Naive thymus-derived CD4-positive, alpha-beta T cell (primary cell): ENCODE measurements at regions of chr19 and their contacts with region 1.

Region 1: GRCh38 chr19:21396893-21397572 is at the start of gene ZNF493:
- DNase-seq: peak; percentile 76 to 95 (median 91)
- ATAC-seq: peak; percentile 100
- H3K4me3 ChIP-seq: peak within 1 kb of the TSS; percentile 80
- H3K4me3 Mint-ChIP-seq: peak within 1 kb of the TSS; percentile 90 to 99 (median 97)
- H3K27ac ChIP-seq: peak within 1 kb of the TSS; percentile 77
- H3K27ac Mint-ChIP-seq: peak within 1 kb of the TSS; percentile 68 to 97 (median 92)
- H3K4me1 ChIP-seq: peaks cover 6 to 11% of the 10 kb centered on the region in 2 donors
- H3K4me1 Mint-ChIP-seq: peaks cover 19 to 48% (median 32%) of the 10 kb centered on the region in 7 donors
- H3K27me3 ChIP-seq: no peaks in the 10 kb centered on the region
- H3K27me3 Mint-ChIP-seq: peaks cover 0 to 4% (median 0%) of the 10 kb centered on the region in 5 donors
- total RNA-seq, gene ZNF493: 19.7 to 78.3 (median 34.6) TPM

Region 2: GRCh38 chr19:20051841-20052768 is 1344.9 kb before region 1 on chr19:
- CTCF ChIA-PET with region 1: no interaction called
- POLR2A ChIA-PET with region 1: no interaction called
- intact Hi-C with region 1: loop called in 1 of 2 experiments (anchors 2 kb)
- DNase-seq: peak; percentile 17 to 50 (median 44)
- ATAC-seq: peak; percentile 93
- H3K4me3 ChIP-seq: peak overlapping the region; percentile 98
- H3K4me3 Mint-ChIP-seq: peak overlapping the region; percentile 95 to 100 (median 98)
- H3K27ac ChIP-seq: peak overlapping the region; percentile 77
- H3K27ac Mint-ChIP-seq: peak overlapping the region; percentile 83 to 97 (median 94)
- H3K4me1 ChIP-seq: peaks cover 8% of the 10 kb centered on the region in 2 donors
- H3K4me1 Mint-ChIP-seq: peaks cover 0 to 17% (median 8%) of the 10 kb centered on the region in 7 donors
- H3K27me3 ChIP-seq: no peaks in the 10 kb centered on the region
- H3K27me3 Mint-ChIP-seq: peaks cover 0 to 4% (median 0%) of the 10 kb centered on the region in 5 donors

Region 3: GRCh38 chr19:21082011-21082975 is 314.7 kb before region 1 on chr19 and contains the start of gene ZNF714:
- CTCF ChIA-PET with region 1: no interaction called
- POLR2A ChIA-PET with region 1: no interaction called
- intact Hi-C with region 1: loop called in 1 of 2 experiments (anchors 5 kb)
- DNase-seq: peak; percentile 55 to 90 (median 80)
- ATAC-seq: peak; percentile 100
- H3K4me3 ChIP-seq: peak within 1 kb of the TSS; percentile 92
- H3K4me3 Mint-ChIP-seq: peak within 1 kb of the TSS; percentile 91 to 100 (median 99)
- H3K27ac ChIP-seq: peak within 1 kb of the TSS; percentile 74
- H3K27ac Mint-ChIP-seq: peak within 1 kb of the TSS; percentile 85 to 99 (median 95)
- H3K4me1 ChIP-seq: no peaks in the 10 kb centered on the region
- H3K4me1 Mint-ChIP-seq: peaks cover 3 to 24% (median 18%) of the 10 kb centered on the region in 7 donors
- H3K27me3 ChIP-seq: no peaks in the 10 kb centered on the region
- H3K27me3 Mint-ChIP-seq: no peaks in the 10 kb centered on the region
- total RNA-seq, gene ZNF714: 7.4 to 22.3 (median 13.3) TPM

Region 4: DNA sequence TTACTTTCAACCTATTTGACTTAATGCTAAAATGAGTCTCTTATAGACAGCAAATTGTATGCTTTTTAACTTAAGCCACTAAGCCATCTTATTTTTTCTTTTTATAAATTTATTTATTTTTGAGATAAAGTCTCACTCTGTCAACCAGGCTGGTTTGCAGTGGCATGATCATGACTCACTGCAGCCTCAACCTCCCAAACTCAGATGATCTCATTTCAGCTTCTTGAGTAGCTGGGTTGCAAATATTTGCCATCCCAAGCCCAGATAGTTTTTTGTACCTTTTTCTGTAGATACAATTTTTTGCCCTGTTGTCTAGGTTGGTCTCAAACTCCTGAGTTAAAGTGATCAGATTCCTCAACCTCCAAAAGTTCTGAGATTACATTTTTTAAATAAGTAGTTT is 287.9 kb before region 1 on chr19:
- CTCF ChIA-PET with region 1: no interaction called
- POLR2A ChIA-PET with region 1: no interaction called
- intact Hi-C with region 1: no loop called
- DNase-seq: no peak
- ATAC-seq: no peak
- H3K4me3 ChIP-seq: no peak overlapping the region
- H3K4me3 Mint-ChIP-seq: no peak overlapping the region
- H3K27ac ChIP-seq: no peak overlapping the region
- H3K27ac Mint-ChIP-seq: no peak overlapping the region
- H3K4me1 ChIP-seq: no peaks in the 10 kb centered on the region
- H3K4me1 Mint-ChIP-seq: no peaks in the 10 kb centered on the region
- H3K27me3 ChIP-seq: no peaks in the 10 kb centered on the region
- H3K27me3 Mint-ChIP-seq: no peaks in the 10 kb centered on the region

Region 5: DNA sequence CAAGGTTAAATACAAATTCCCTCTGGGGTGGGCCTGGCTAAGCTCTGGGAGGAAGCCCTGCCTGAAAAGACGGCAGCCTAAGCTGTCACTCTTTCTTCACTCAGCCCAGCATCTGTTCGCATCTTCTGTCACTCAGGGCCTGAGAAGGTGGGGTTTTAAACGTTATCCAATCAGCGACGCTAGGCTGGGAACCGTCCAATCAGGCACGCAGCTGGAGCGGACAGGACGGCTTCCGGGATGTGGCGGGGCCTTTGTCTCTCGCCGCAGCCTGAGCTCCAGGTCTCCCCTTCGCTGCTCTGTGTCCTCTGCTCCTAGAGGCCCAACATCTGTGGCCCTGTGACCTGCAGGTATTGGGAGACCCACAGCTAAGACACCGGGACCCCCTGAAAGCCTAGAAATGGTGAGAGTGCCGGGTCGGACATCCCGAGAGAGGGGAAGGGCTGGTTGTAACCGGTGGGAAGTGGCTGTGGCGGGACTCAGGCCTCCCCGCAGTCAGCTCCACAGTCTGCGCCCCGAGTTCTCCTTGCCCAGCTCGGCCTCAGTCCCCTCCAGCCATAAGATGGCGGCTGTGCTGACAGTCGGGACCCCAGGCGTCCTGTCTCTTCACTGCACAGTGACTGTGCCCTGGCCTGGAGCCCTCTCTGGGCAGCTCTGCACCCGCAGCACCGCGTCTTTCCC is 255.1 kb before region 1 on chr19 and contains the start of gene ZNF431:
- CTCF ChIA-PET with region 1: no interaction called
- POLR2A ChIA-PET with region 1: interaction called, 3 read pairs
- intact Hi-C with region 1: loop called (anchors 1 to 5 kb)
- DNase-seq: peak; percentile 63 to 95 (median 91)
- ATAC-seq: peak; percentile 100
- H3K4me3 ChIP-seq: peak within 1 kb of the TSS; percentile 94
- H3K4me3 Mint-ChIP-seq: peak within 1 kb of the TSS; percentile 95 to 98 (median 97)
- H3K27ac ChIP-seq: peak within 1 kb of the TSS; percentile 91
- H3K27ac Mint-ChIP-seq: peak within 1 kb of the TSS; percentile 93 to 99 (median 96)
- H3K4me1 ChIP-seq: peaks cover 3 to 6% of the 10 kb centered on the region in 2 donors
- H3K4me1 Mint-ChIP-seq: peaks cover 20 to 69% (median 54%) of the 10 kb centered on the region in 7 donors
- H3K27me3 ChIP-seq: no peaks in the 10 kb centered on the region
- H3K27me3 Mint-ChIP-seq: no peaks in the 10 kb centered on the region
- total RNA-seq, gene ZNF431: 19.1 to 36.8 (median 25.4) TPM

Region 6: DNA sequence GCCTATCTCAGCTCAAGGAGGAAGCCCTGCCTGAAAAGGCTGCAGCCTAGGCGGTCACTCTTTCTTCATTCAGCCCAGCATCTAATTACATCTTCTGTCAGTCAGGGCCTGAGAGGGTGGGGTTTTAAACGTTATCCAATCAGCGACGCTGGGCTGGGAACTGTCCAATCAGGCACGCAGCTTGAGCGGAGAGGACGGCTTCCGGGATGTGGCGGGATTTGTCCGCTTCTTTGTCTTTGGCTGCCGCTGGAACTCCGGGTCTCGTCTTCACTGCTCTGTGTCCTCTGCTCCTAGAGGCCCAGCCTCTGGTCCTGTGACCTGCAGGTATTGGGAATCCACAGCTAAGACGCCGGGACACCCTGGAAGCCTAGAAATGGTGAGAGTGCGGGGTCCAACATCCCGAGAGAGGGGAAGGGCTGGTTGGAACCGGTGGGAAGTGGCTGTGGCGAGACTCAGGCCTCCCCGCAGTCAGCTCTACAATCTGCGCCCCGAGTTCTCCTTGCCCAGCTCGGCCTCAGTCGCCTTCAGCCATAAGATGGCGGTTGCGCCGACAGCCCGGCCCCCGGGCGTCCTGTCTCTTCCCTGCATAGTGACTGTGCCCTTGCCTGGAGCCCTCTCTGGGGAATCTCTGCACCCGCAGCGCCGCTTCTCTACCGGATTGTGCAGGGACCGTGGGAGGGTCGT is 38.1 kb before region 1 on chr19 and contains the start of gene ZNF738:
- CTCF ChIA-PET with region 1: no interaction called
- POLR2A ChIA-PET with region 1: interaction called, 6 read pairs
- intact Hi-C with region 1: loop called (anchors 1 kb)
- DNase-seq: peak; percentile 59 to 87 (median 76)
- ATAC-seq: peak; percentile 98
- H3K4me3 ChIP-seq: peak within 1 kb of the TSS; percentile 98
- H3K4me3 Mint-ChIP-seq: peak within 1 kb of the TSS; percentile 93 to 99 (median 98)
- H3K27ac ChIP-seq: peak within 1 kb of the TSS; percentile 77
- H3K27ac Mint-ChIP-seq: peak within 1 kb of the TSS; percentile 85 to 98 (median 91)
- H3K4me1 ChIP-seq: peaks cover 0 to 6% of the 10 kb centered on the region in 2 donors
- H3K4me1 Mint-ChIP-seq: peaks cover 6 to 17% (median 14%) of the 10 kb centered on the region in 7 donors
- H3K27me3 ChIP-seq: no peaks in the 10 kb centered on the region
- H3K27me3 Mint-ChIP-seq: no peaks in the 10 kb centered on the region
- total RNA-seq, gene ZNF738: 6.4 to 11.4 (median 9.8) TPM

Region 7: DNA sequence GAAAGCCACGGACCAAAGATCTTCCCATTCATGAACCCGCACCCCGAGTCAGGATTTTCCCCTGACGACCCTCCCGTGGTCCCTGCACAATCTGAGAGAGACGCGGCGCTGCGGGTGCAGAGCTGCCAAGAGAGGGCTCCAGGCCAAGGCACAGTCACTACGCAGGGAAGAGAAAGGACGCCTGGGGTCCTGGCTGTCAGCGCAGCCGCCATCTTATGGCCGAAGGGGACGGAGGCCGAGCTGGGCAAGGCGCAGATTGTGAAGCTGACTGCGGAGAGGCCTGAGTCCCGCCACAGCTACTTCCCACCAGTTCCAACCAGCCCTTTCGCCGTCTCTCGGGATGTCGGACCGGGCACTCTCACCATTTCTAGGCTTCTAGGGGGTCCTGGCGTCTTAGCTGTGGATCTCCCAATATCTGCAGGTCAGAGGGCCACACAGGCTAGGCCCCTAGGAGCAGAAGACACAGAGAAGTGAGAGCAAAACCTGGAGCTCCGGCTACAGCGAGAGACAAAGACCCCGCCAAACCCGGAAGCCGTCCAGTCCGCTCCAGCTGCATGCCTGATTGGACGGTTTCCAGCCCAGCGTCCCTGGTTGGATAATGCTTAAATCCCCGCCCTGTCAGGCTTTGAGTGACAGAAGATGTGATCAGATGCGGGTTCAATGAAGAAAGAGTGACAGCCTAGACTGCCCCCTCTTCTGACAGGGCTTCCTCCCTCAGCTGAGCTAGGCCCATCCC is 370.2 kb after region 1 on chr19 and contains the start of gene ZNF100:
- CTCF ChIA-PET with region 1: no interaction called
- POLR2A ChIA-PET with region 1: no interaction called
- intact Hi-C with region 1: loop called in 1 of 2 experiments (anchors 2 kb)
- DNase-seq: peak; percentile 64 to 88 (median 80)
- ATAC-seq: peak; percentile 98
- H3K4me3 ChIP-seq: peak within 1 kb of the TSS; percentile 97
- H3K4me3 Mint-ChIP-seq: peak within 1 kb of the TSS; percentile 92 to 98 (median 97)
- H3K27ac ChIP-seq: peak within 1 kb of the TSS; percentile 81
- H3K27ac Mint-ChIP-seq: peak within 1 kb of the TSS; percentile 89 to 98 (median 92)
- H3K4me1 ChIP-seq: no peaks in the 10 kb centered on the region
- H3K4me1 Mint-ChIP-seq: peaks cover 7 to 43% (median 27%) of the 10 kb centered on the region in 7 donors
- H3K27me3 ChIP-seq: no peaks in the 10 kb centered on the region
- H3K27me3 Mint-ChIP-seq: no peaks in the 10 kb centered on the region
- total RNA-seq, gene ZNF100: 9.5 to 22.5 (median 18.4) TPM

Region 8: GRCh38 chr19:22052644-22053013 is 655.6 kb after region 1 on chr19:
- CTCF ChIA-PET with region 1: no interaction called
- POLR2A ChIA-PET with region 1: no interaction called
- intact Hi-C with region 1: loop called in 1 of 2 experiments (anchors 5 kb)
- DNase-seq: no peak
- ATAC-seq: peak; percentile 44
- H3K4me3 ChIP-seq: peak overlapping the region; percentile 76
- H3K4me3 Mint-ChIP-seq: peak overlapping the region; percentile 89 to 96 (median 94)
- H3K27ac ChIP-seq: peak overlapping the region; percentile 72
- H3K27ac Mint-ChIP-seq: peak overlapping the region; percentile 65 to 92 (median 88)
- H3K4me1 ChIP-seq: no peaks in the 10 kb centered on the region
- H3K4me1 Mint-ChIP-seq: peaks cover 0 to 14% (median 0%) of the 10 kb centered on the region in 7 donors
- H3K27me3 ChIP-seq: no peaks in the 10 kb centered on the region
- H3K27me3 Mint-ChIP-seq: no peaks in the 10 kb centered on the region